Activated T-helper 1 cell treated with anti-CD3 and anti-CD28 coated beads, Interleukin-12 subunit alpha, Interleukin-12 subunit beta, Interleukin-2, Interleukin-4 antibody, amounts not matched to agents 30 ng/mL and 10 ng/mL and 1 ng/mL, durations not matched to agents 14 hours and 24 hours and 36 hours (primary cell): ENCODE measurements at regions of chr7 and their contacts with region 1.

Region 1: GRCh38 chr7:38463277-38464225 is 167.6 kb downstream of the AMPH start:
- DNase-seq: peak; percentile 61
- H3K4me3 Mint-ChIP-seq: peak overlapping the region; percentile 29
- H3K27ac Mint-ChIP-seq: peak overlapping the region; percentile 61
- H3K4me1 Mint-ChIP-seq: peaks cover 20% of the 10 kb centered on the region
- H3K27me3 Mint-ChIP-seq: peaks cover 5% of the 10 kb centered on the region

Region 2: GRCh38 chr7:38070718-38071117 is 392.8 kb before region 1 on chr7:
- intact Hi-C with region 1: no loop called
- DNase-seq: no peak
- H3K4me3 Mint-ChIP-seq: no peak overlapping the region
- H3K27ac Mint-ChIP-seq: no peak overlapping the region
- H3K4me1 Mint-ChIP-seq: no peaks in the 10 kb centered on the region
- H3K27me3 Mint-ChIP-seq: peaks cover 14% of the 10 kb centered on the region

Region 3: DNA sequence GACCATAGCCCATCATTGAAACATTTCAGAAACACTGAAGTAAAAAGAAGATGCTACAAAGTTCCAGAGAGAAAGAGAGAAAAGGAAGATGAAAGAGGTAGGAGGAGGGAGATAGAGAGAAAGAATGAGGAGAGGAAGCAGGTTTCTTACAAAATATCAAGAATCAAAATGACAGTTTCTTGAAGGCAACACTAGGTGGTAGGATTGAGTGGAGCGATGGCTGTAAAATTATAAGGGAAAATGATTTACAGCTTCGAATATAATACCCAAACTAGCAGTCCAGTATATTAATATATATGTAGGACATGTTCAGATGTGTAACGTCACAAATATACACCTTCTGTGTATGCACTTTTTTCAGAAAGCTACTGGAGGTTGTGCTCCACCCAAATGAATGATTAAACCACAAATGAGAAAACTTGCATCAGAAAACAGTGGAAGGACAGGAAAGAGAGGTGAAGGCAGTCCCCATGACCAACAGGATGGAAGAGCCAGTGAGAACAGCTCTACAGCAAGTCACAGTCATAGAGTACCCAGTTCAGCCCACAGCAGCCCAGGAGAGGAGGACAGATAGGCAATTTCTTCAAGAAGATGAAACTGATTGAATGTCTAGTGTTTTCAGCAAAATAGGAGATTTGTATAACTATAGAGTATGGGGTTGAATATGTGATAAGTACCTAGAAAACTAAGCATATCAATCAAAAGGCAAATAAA is 38.6 kb before region 1 on chr7:
- intact Hi-C with region 1: loop called (anchors 2 kb)
- DNase-seq: no peak
- H3K4me3 Mint-ChIP-seq: no peak overlapping the region
- H3K27ac Mint-ChIP-seq: no peak overlapping the region
- H3K4me1 Mint-ChIP-seq: peaks cover 28% of the 10 kb centered on the region
- H3K27me3 Mint-ChIP-seq: peaks cover 8% of the 10 kb centered on the region

Region 4: DNA sequence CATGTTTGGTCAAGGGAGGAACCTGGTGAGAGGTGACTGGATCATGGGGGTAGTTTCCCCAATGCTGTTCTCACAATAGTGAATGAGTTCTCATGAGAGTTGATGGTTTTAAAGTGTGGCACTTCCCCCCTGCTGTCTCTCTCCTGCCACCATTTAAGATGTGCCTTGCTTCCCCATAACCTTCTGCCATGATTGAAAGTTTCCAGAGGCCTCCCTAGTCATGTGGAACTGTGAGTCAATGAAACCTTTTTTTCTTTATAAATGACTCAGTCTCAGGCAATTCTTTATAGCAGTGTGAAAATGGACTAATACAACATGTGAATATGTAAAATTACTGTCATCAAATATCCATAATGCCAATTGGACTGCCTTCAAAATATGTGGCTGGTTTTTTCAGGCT is 24.6 kb before region 1 on chr7:
- intact Hi-C with region 1: loop called (anchors 2 kb)
- DNase-seq: no peak
- H3K4me3 Mint-ChIP-seq: no peak overlapping the region
- H3K27ac Mint-ChIP-seq: no peak overlapping the region
- H3K4me1 Mint-ChIP-seq: no peaks in the 10 kb centered on the region
- H3K27me3 Mint-ChIP-seq: peaks cover 13% of the 10 kb centered on the region

Region 5: GRCh38 chr7:38451840-38452239 is 11.7 kb before region 1 on chr7:
- intact Hi-C with region 1: no loop called
- DNase-seq: no peak
- H3K4me3 Mint-ChIP-seq: no peak overlapping the region
- H3K27ac Mint-ChIP-seq: no peak overlapping the region
- H3K4me1 Mint-ChIP-seq: no peaks in the 10 kb centered on the region
- H3K27me3 Mint-ChIP-seq: peaks cover 24% of the 10 kb centered on the region